GM12878 (cell line): ENCODE measurements at regions of chr14 and their contacts with region 1.

Region 1: DNA sequence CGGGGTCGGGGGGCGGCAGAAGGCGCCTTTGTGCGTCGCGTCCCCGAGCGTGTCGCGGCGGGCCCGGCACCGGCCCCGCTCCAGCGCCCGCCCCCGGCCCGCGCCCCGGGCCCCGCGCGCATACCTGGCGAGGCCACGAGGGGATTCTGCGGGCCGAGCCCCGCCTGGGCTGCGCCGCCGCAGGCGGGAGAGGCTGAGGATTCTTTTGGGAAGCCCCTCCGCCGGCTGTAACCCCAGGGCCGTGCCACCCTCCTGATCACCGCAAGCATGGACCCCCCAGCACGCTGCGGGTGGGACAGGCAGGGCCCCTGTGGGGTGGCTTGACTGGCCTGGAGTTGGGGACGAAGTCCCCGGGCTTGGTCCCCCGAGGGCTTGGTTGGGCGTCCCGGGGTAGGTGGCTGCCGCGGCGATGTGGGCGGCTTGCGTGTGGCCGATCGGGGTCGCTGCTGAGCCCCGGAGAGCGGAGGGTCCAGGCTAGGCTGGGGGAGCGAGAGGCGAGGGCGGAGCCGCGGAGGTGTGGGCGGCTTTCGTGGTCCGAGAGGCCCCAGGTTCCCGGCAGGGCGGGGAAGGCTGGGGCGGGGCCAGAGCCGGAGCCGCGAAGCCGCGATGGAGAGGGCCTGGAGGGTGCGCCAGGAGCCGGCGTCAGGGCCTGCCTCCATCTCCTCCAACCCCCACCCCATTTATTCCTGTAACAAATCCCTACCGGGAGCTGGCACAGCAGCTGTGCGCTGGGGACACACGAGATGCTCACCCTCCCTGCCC is 28.4 kb upstream of the GPR132 start:
- DNase-seq: peak; percentile 43
- ATAC-seq: peak; percentile 86
- H3K4me3 ChIP-seq: peak overlapping the region; percentile 91
- H3K27ac ChIP-seq: peak overlapping the region; percentile 58
- H3K4me1 ChIP-seq: peaks cover 10% of the 10 kb centered on the region
- H3K27me3 ChIP-seq: no peaks in the 10 kb centered on the region
- CTCF ChIP-seq: peak; percentile 52 to 64 (median 60)
- EP300 ChIP-seq: 0 out of 4 replicates have a peak, but pooled peaks of 1 of the 2 experiments have one; percentile 27
- POLR2A ChIP-seq: peak; percentile 67
- RAD21 ChIP-seq: peak; percentile 40

Region 2: DNA sequence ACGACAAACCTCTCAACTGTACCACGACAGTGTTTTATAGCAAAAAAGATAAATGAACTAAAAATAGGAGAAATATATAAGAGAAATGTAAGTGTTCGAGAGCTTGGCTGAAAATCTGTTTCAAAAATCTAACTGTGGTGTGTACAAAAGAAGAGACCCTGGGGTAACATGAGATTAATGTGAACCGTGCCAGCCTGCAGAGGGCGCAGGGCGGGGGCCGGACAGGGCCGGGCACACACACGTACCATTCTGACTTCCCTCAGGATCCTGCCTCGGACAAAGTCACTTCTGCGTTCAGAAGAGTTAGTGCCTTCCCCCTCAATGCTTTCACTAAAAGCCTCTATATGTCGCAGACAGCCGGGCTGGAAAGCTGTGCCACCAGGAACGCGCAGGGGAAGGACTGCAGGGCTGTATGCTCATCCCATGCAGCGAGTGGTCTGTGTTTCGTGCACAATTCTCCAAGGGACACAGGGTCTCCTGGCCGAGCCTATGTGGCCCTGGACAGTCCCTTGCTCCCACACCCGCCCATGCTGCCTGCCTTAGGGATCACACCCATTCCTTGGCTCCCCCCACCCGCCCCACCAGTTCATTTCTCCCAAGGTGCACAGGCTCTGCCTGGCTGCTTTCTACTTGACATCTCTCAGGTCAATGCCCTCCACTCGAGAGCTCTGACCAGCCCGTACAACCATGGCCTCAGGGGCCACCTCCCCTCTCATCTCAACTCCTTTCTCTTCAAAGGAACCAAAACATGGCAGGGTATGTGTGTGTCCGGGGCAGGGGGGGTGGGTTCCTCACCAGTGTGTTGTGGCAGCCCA is 81.2 kb before region 1 on chr14:
- CTCF ChIA-PET with region 1: no interaction called
- POLR2A ChIA-PET with region 1: no interaction called
- RAD21 ChIA-PET with region 1: no interaction called
- SMC1A ChIA-PET with region 1: no interaction called
- in situ Hi-C with region 1: no loop called
- intact Hi-C with region 1: no loop called
- DNase-seq: no peak
- ATAC-seq: peak; percentile 29; the same call in 1 of the 3 replicates
- H3K4me3 ChIP-seq: no peak overlapping the region
- H3K27ac ChIP-seq: no peak overlapping the region
- H3K4me1 ChIP-seq: peaks cover 20% of the 10 kb centered on the region
- H3K27me3 ChIP-seq: no peaks in the 10 kb centered on the region
- CTCF ChIP-seq: peak in 2 of 3 experiments; percentile 17 to 36; a peak in 2 of 6 replicates
- EP300 ChIP-seq: no peak
- POLR2A ChIP-seq: no peak; the same call in 1 of the 2 replicates
- RAD21 ChIP-seq: no peak

Region 3: DNA sequence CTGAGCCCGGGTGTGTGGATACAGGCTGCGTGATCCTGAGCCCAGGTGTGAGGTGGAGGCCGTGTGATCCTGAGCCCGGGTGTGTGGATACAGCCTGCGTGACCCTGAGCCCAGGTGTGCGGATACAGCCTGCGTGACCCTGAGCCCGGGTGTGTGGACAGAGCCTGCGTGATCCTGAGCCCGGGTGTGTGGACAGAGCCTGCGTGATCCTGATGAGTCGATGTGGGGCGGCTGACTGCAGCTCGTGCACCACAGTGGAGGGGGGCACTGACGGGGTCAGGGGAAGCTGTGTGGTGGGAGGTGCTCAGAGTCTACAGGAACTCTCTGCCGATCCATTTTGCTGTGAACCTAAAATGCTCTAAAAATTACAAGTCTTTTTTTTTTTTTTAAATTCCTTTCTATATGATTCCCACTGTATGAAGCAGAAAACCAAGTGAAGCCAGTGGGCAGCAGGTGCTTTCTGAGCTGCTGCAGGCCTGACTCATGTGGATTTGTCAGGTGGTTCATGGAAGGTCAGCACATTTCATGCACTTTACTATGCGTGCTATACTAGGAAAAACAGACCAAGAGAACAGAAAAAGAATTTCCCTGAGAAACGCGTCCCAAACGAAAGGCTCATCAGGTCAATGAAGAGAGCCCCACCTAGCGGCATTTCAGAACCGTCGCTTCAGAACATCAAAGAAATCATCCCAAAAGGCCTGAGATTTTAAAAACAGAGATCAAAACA is 187.9 kb after region 1 on chr14:
- CTCF ChIA-PET with region 1: interaction called, 7 read pairs
- POLR2A ChIA-PET with region 1: no interaction called
- RAD21 ChIA-PET with region 1: interaction called, 4 read pairs
- SMC1A ChIA-PET with region 1: no interaction called
- in situ Hi-C with region 1: no loop called
- intact Hi-C with region 1: loop called (anchors 2 kb)
- DNase-seq: no peak
- ATAC-seq: peak; percentile 55
- H3K4me3 ChIP-seq: no peak overlapping the region
- H3K27ac ChIP-seq: no peak overlapping the region
- H3K4me1 ChIP-seq: no peaks in the 10 kb centered on the region; the same call in 1 of the 2 replicates
- H3K27me3 ChIP-seq: no peaks in the 10 kb centered on the region
- CTCF ChIP-seq: peak; percentile 56 to 72 (median 70)
- EP300 ChIP-seq: no peak
- POLR2A ChIP-seq: no peak
- RAD21 ChIP-seq: peak; percentile 67